Vagina (tissue), 2 donors: ENCODE measurements at regions of chrX and their contacts with region 1.

Region 1: GRCh38 chrX:12013220-12013619 is 125.1 kb upstream of the FRMPD4 start:
- DNase-seq: no peak
- H3K4me3 ChIP-seq: no peak overlapping the region
- H3K27ac ChIP-seq: no peak overlapping the region
- H3K4me1 ChIP-seq: no peaks in the 10 kb centered on the region
- H3K27me3 ChIP-seq: no peaks in the 10 kb centered on the region
- CTCF ChIP-seq: no peak
- POLR2A ChIP-seq: no peak

Region 2: GRCh38 chrX:10039821-10040793 is 1973.1 kb before region 1 on chrX:
- intact Hi-C with region 1: loop called (anchors 10 kb)
- DNase-seq: no peak
- H3K4me3 ChIP-seq: no peak overlapping the region
- H3K27ac ChIP-seq: no peak overlapping the region
- H3K4me1 ChIP-seq: peaks cover 10% of the 10 kb centered on the region
- H3K27me3 ChIP-seq: no peaks in the 10 kb centered on the region
- CTCF ChIP-seq: no peak
- POLR2A ChIP-seq: no peak

Region 3: GRCh38 chrX:10173316-10173900 is 1839.8 kb before region 1 on chrX:
- intact Hi-C with region 1: no loop called
- DNase-seq: no peak
- H3K4me3 ChIP-seq: peak overlapping the region in 1 of 2 donors; percentile 18
- H3K27ac ChIP-seq: peak overlapping the region; percentile 75
- H3K4me1 ChIP-seq: peaks cover 18% of the 10 kb centered on the region
- H3K27me3 ChIP-seq: no peaks in the 10 kb centered on the region
- CTCF ChIP-seq: no peak
- POLR2A ChIP-seq: no peak

Region 4: DNA sequence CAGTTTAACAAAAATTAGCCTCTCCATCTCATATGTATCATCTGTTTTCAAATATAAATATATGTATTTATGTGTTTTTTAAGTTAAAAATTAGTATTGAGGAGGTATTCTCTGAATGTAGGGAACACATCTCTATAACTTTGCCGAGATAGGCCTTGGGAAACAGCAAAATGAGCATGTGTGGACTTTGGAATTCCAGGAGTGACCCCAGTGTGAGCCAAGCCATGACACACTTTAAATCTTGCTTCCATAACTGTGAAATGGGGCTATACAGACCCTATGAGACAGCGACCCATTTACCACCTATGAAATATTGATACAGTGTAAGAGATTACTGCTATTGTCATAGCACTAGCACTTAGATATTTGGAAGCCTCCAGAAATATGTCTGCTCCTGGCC is 183.8 kb after region 1 on chrX:
- intact Hi-C with region 1: no loop called
- DNase-seq: no peak
- H3K4me3 ChIP-seq: no peak overlapping the region
- H3K27ac ChIP-seq: no peak overlapping the region
- H3K4me1 ChIP-seq: no peaks in the 10 kb centered on the region
- H3K27me3 ChIP-seq: no peaks in the 10 kb centered on the region
- CTCF ChIP-seq: no peak
- POLR2A ChIP-seq: no peak